ENCODE measurements at regions of chr16 and their contacts with region 1.

Region 1: DNA sequence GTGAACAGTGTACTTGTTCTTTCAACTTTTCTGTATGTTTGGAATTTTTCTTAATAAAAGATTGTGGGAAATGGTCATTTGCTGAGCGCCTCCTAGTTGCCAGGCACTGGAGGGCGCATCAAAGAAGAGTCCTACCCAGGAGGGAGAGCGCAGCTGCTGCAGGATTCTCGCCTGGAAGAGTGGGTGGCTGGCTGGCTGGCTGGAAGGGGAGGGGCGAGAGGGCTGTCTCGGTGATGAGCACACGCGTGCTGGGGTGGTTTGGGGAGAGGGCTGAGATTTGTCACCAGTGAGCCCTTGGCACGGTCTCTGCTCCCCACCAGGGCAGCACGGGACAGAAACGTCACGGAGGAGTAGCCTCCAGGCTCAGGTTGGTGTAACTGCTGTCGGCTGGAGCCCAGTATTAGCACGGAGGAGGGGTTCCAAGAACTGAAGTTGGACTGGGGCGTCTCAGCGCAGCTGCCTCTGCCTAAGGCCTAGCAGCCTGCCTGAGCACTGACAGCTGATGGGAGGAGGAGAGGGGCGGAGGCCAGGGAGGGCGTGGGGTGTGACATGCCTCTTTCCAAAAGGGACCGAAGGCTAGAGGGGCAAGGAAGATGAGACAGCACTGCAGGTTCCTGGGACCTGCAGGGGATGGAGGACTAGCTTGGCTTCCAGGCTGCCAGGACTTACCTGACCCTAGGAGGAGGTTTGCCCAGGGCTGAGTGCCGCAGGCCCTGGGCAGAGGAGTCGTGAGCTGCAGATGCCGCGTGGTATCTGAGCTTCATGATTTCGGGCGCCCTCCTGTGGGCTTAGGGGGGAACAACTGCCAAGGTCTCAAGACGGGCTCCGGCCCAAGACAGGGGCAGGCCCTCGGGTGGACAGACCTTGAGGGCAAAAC is 5.7 kb downstream of the LDHD start:
- DNase-seq: peak; percentile 87 to 93 (median 88)
- ATAC-seq: peak; percentile 92
- H3K4me3 ChIP-seq: no peak overlapping the region
- H3K27ac ChIP-seq: peak overlapping the region; percentile 13; the same call in 2 of the 3 replicates
- H3K4me1 ChIP-seq: peaks cover 11 to 72% of the 10 kb centered on the region in 2 experiments; a peak in 4 of 5 replicates
- H3K27me3 ChIP-seq: no peaks in the 10 kb centered on the region
- CTCF ChIP-seq: peak; percentile 90 to 95 (median 92)
- EP300 ChIP-seq: peak; percentile 40
- POLR2A ChIP-seq: peak; percentile 25; the same call in 1 of the 2 replicates
- RAD21 ChIP-seq: peak; percentile 95

Region 2: GRCh38 chr16:74991593-74992403 is 119.1 kb before region 1 on chr16:
- CTCF ChIA-PET with region 1: no interaction called
- POLR2A ChIA-PET with region 1: interaction called, 7 read pairs
- in situ Hi-C with region 1: loop called (anchors 5 kb)
- intact Hi-C with region 1: no loop called
- DNase-seq: peak; percentile 67 to 75 (median 68)
- ATAC-seq: peak; percentile 66
- H3K4me3 ChIP-seq: no peak overlapping the region
- H3K27ac ChIP-seq: peak overlapping the region; percentile 44
- H3K4me1 ChIP-seq: peaks cover 33 to 35% of the 10 kb centered on the region in 2 experiments; a peak in 4 of 5 replicates
- H3K27me3 ChIP-seq: no peaks in the 10 kb centered on the region
- CTCF ChIP-seq: no peak
- EP300 ChIP-seq: peak; percentile 68
- POLR2A ChIP-seq: no peak
- RAD21 ChIP-seq: no peak

Region 3: DNA sequence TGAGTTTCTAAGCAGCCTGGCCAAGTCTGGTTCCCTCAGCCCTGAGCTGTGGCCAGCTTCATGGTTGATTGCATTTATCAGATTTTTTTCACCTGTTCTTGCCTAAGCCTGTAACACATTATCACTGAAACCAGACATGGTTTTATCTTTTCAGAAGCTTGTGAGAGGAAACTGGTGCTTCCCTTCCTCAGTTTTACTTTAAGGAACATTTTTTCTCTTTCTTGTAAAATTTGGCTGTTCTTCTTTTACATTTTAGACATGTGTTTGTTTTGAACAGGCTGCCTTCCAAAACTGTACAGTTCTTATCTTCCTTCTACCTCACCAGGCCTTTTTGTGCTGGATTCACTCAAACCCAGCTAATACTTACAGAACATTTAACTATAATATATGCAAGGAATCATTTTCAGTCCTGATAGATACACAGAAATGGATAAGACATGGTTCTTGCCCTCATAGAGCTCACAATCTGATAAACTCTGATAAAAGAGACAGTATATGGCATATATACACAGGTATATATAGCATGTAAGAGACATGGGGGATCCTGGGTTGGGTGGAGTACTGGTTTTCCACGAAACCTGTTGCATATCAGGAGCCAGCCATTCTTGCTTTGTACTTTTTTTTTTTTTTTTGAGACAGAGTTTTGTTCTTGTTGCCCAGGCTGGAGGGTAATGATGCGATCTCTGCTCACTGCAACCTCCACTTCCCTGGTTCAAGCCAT is 67.5 kb before region 1 on chr16:
- CTCF ChIA-PET with region 1: no interaction called
- POLR2A ChIA-PET with region 1: interaction called, 4 read pairs
- in situ Hi-C with region 1: no loop called
- intact Hi-C with region 1: loop called (anchors 5 kb)
- DNase-seq: peak; percentile 63 to 92 (median 74)
- ATAC-seq: peak; percentile 88
- H3K4me3 ChIP-seq: no peak overlapping the region; the same call in 1 of the 2 replicates
- H3K27ac ChIP-seq: peak overlapping the region; percentile 95
- H3K4me1 ChIP-seq: peaks cover 26 to 61% of the 10 kb centered on the region in 2 experiments
- H3K27me3 ChIP-seq: no peaks in the 10 kb centered on the region
- CTCF ChIP-seq: no peak; a peak in 1 of 6 replicates
- EP300 ChIP-seq: peak; percentile 99
- POLR2A ChIP-seq: no peak
- RAD21 ChIP-seq: peak in 1 of 2 experiments; percentile 33; a peak in 2 of 4 replicates

Region 4: GRCh38 chr16:75122609-75123008 is 11.7 kb after region 1 on chr16:
- CTCF ChIA-PET with region 1: no interaction called
- POLR2A ChIA-PET with region 1: no interaction called
- in situ Hi-C with region 1: no loop called
- intact Hi-C with region 1: no loop called
- DNase-seq: no peak
- ATAC-seq: no peak
- H3K4me3 ChIP-seq: no peak overlapping the region
- H3K27ac ChIP-seq: peak overlapping the region; percentile 60; the same call in 2 of the 3 replicates
- H3K4me1 ChIP-seq: no peaks in the 10 kb centered on the region
- H3K27me3 ChIP-seq: no peaks in the 10 kb centered on the region
- CTCF ChIP-seq: no peak
- EP300 ChIP-seq: no peak
- POLR2A ChIP-seq: no peak
- RAD21 ChIP-seq: no peak

Region 5: GRCh38 chr16:75354170-75354569 is 243.3 kb after region 1 on chr16:
- CTCF ChIA-PET with region 1: no interaction called
- POLR2A ChIA-PET with region 1: no interaction called
- in situ Hi-C with region 1: no loop called
- intact Hi-C with region 1: no loop called
- DNase-seq: no peak
- ATAC-seq: no peak
- H3K4me3 ChIP-seq: no peak overlapping the region
- H3K27ac ChIP-seq: no peak overlapping the region
- H3K4me1 ChIP-seq: no peaks in the 10 kb centered on the region
- H3K27me3 ChIP-seq: no peaks in the 10 kb centered on the region
- CTCF ChIP-seq: no peak
- EP300 ChIP-seq: no peak
- POLR2A ChIP-seq: no peak
- RAD21 ChIP-seq: no peak

Measured in K562 (cell line).